ENCODE measurements at regions of chr1 and their contacts with region 1.

Region 1: GRCh38 chr1:12326986-12327385 is 97.2 kb downstream of the VPS13D start:
- DNase-seq: no peak
- H3K4me3 ChIP-seq: no peak overlapping the region
- CTCF ChIP-seq: no peak
- POLR2A ChIP-seq: no peak

Region 2: DNA sequence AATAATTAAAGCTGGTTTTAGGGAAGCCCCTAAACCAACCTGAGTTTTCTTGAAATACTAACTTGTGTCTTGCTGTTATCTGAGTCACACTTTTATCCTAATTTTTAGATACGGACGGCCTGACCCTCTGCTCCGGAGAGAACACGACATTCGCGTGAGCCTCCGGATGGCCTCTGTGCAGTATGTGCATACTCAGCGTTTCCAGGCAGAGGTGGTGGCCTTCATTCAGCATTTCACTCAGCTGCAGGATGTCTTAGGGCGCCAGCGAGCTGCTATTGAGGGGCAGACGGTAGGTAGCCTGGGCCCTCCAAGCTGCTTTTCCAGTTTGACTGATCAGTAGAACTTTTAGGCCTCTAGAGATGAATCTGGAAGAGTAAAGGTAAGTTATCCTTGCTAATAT is 33.6 kb before region 1 on chr1:
- intact Hi-C with region 1: loop called (anchors 2 kb)
- DNase-seq: no peak
- H3K4me3 ChIP-seq: no peak overlapping the region
- CTCF ChIP-seq: no peak
- POLR2A ChIP-seq: no peak

Measured in lower leg skin (tissue), 4 donors.